Activated CD4-positive, alpha-beta T cell treated with anti-CD3 and anti-CD28 coated beads, Interleukin-2, amount 10 ng/mL, durations not matched to agents 24 days and 14 days (primary cell): ENCODE measurements at regions of chr7 and their contacts with region 1.

Region 1: DNA sequence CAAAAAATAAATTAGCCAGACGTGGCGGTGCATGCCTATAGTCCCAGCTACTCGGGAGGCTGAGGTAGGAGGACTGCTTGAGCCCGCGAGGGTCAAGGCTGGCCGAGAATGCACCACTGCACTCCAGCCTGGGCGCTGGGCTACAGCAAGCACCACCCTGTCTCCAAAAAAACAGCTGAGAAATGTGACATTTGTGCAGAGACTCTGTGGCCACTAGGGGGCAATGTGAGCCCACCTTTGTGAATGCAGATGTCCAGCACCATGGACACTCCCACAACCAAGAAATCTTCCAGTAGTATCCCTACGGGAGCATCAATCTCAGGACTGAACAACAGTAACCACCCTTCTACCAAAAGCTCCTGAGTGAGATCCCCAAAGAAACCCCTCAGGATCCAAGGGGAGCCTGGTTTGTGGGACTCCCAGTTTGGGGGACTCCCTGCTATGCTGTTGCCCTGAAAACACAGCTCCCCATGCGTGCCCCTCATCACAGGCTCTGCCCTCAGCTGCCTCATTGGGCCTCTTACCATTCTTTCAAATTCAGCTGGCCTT is 6.2 kb upstream of the AHCYL2 start:
- DNase-seq: peak; percentile 93
- H3K4me3 Mint-ChIP-seq: no peak overlapping the region
- H3K27ac Mint-ChIP-seq: no peak overlapping the region
- H3K4me1 Mint-ChIP-seq: peaks cover 11% of the 10 kb centered on the region
- H3K27me3 Mint-ChIP-seq: no peaks in the 10 kb centered on the region

Region 2: DNA sequence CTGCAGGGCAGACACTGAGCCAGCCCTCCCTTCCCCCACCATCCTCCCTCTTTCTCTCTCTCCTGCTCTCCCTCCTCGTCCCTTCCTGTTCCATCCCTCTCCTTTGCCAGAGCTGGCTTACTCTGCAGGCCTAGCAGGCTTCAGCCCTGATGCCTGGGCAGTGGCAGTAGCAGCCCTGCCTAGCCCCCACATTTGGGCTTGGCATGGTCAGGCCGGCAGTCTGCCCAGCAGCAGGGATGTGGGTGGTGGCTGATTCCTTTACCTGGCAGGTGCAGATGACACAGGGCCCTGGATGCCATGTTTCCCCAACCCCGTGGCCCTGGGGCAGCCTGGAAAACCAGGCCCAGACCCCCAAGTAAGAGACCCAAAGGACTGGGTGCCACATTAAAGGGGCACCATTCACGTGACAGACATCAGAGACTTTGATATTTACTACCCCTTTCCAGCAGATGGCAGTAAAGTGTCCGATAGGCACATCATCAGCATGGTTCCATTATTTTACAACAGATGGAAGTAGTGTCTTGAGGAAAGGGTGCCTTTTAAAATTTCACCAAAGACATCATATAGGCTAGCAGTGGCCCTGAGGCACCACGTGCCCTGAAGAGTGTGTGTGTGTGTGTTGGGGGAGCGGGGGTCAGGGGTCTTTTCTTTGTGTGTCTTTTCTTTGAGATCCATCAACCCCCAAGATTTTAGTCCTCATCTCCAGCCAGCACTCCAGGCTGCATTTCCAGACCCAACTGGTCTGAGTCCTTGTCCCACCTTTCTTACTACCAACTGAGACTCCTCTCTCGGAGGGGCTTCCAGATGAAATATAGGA is 314.0 kb before region 1 on chr7:
- intact Hi-C with region 1: loop called (anchors 10 kb)
- DNase-seq: peak; percentile 80
- H3K4me3 Mint-ChIP-seq: no peak overlapping the region
- H3K27ac Mint-ChIP-seq: no peak overlapping the region
- H3K4me1 Mint-ChIP-seq: no peaks in the 10 kb centered on the region
- H3K27me3 Mint-ChIP-seq: peaks cover 18% of the 10 kb centered on the region

Region 3: GRCh38 chr7:129271500-129272355 is 53.1 kb after region 1 on chr7:
- intact Hi-C with region 1: loop called (anchors 1 kb)
- DNase-seq: peak; percentile 91
- H3K4me3 Mint-ChIP-seq: peak overlapping the region; percentile 53
- H3K27ac Mint-ChIP-seq: peak overlapping the region; percentile 35
- H3K4me1 Mint-ChIP-seq: peaks cover 5% of the 10 kb centered on the region
- H3K27me3 Mint-ChIP-seq: no peaks in the 10 kb centered on the region

Region 4: DNA sequence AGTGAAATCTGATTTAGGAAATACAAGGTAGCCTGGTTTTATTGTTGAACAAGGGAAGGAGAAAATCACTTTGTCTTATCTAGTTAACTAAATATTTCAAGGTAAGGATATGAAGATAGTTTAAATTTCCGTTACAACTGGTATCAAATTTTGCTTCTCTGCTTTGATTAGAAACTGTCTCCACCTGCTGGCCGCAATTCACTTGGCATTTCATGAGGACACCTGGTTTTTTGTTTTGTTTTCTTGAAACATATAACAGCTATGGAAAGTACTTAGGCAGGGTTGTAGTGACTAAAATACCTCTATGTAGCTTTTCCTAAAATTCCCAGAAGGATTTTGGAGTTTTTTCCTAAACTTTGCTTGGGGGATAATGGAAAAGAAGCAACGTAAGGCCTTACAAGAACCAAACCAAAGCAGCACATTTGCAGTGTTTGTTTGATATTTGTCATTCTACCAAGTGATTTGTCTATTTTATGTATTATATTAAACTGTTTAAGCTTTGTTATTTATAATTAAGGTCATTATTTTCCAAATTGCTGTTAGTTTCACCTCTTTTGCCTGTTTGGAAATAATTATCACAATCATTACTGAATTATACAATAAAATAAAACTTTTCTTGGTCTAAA is 79.8 kb after region 1 on chr7:
- intact Hi-C with region 1: loop called (anchors 1 kb)
- DNase-seq: peak; percentile 82
- H3K4me3 Mint-ChIP-seq: no peak overlapping the region
- H3K27ac Mint-ChIP-seq: no peak overlapping the region
- H3K4me1 Mint-ChIP-seq: no peaks in the 10 kb centered on the region
- H3K27me3 Mint-ChIP-seq: peaks cover 4% of the 10 kb centered on the region